ENCODE measurements at regions of chr1 and their contacts with region 1.

Region 1: DNA sequence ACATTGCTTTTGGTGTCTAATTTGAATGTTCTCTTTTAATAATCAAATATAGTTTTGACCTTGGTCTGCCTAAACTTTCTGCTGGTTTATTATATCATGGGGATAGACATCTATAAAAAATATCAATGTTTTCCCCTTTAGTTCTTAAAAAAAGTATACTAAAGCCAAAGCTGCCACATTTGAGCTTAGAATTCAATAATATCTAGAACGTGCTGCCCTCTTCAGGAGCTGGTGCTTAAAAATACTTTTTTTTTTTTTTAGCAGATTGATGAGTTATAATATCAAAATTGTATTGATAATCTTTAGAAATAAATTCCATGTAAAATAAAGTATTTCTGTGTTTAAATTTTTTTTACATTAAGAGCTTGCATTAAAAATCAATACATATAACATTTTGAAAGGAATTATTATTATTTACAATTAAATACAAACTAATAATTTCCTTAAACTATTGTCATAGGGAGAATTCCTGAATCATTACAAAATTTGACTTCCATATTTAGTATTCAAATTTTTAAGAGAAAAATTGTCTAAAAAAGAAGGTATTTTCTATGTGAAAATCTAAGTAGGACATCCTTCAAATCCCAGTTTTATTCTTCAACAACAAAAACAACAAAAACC is 40.1 kb upstream of the ADGRL2 start:
- DNase-seq: peak; percentile 45
- ATAC-seq: no peak
- H3K4me3 ChIP-seq: no peak overlapping the region
- H3K27ac ChIP-seq: no peak overlapping the region
- H3K4me1 ChIP-seq: no peaks in the 10 kb centered on the region
- H3K27me3 ChIP-seq: no peaks in the 10 kb centered on the region
- CTCF ChIP-seq: peak; percentile 54
- POLR2A ChIP-seq: no peak
- RAD21 ChIP-seq: peak; percentile 63

Region 2: DNA sequence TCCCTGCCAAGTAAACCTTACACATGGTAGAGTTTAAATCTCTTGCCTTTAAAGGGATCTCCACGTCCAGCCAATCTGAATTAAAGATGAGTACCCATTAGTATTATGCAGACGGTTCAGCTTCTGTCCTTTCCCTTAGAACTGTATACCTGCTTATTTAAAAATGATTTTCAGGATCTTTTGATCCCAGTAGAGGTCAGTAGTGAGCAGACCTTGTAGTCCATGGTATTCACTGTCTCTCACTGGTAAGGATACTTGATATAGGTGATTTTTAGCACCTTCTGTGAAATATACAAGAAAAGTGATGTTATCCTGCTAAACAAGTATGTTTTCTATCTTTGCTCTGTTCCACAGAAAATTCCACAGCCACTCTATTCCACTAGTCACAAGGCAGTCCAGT is 1542.5 kb before region 1 on chr1:
- CTCF ChIA-PET with region 1: no interaction called
- POLR2A ChIA-PET with region 1: no interaction called
- dilution Hi-C with region 1: no loop called
- in situ Hi-C with region 1: no loop called
- intact Hi-C with region 1: loop called (anchors 5 kb)
- DNase-seq: peak; percentile 59
- ATAC-seq: peak; percentile 85
- H3K4me3 ChIP-seq: no peak overlapping the region
- H3K27ac ChIP-seq: no peak overlapping the region
- H3K4me1 ChIP-seq: no peaks in the 10 kb centered on the region
- H3K27me3 ChIP-seq: no peaks in the 10 kb centered on the region
- CTCF ChIP-seq: peak; percentile 58
- POLR2A ChIP-seq: no peak
- RAD21 ChIP-seq: peak; percentile 57

Region 3: GRCh38 chr1:80248886-80249285 is 1511.7 kb before region 1 on chr1:
- CTCF ChIA-PET with region 1: no interaction called
- POLR2A ChIA-PET with region 1: no interaction called
- dilution Hi-C with region 1: no loop called
- in situ Hi-C with region 1: loop called (anchors 25 kb)
- intact Hi-C with region 1: no loop called
- DNase-seq: peak; percentile 29
- ATAC-seq: no peak
- H3K4me3 ChIP-seq: no peak overlapping the region
- H3K27ac ChIP-seq: no peak overlapping the region
- H3K4me1 ChIP-seq: no peaks in the 10 kb centered on the region
- H3K27me3 ChIP-seq: no peaks in the 10 kb centered on the region
- CTCF ChIP-seq: no peak
- POLR2A ChIP-seq: no peak
- RAD21 ChIP-seq: no peak

Region 4: DNA sequence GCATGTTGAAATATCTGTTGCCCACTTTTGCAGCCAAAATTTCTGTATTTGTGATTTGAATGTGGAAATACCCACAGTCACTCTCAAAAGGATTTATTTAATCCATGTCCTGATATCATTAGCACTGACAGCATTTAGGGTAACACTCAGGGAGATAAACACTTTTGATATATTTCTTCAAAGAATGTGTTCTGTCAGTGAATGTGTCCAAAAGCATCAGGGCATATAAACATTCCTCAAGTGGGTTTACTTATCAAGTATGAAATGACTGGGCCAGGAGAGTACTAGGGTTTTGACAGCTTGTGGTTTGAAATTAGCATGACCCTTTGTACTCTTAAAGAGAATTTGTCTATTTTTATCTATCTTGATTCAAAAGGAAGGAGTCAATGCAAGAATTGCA is 1261.9 kb before region 1 on chr1:
- CTCF ChIA-PET with region 1: interaction called, 10 read pairs
- POLR2A ChIA-PET with region 1: no interaction called
- dilution Hi-C with region 1: no loop called
- in situ Hi-C with region 1: no loop called
- intact Hi-C with region 1: no loop called
- DNase-seq: no peak
- ATAC-seq: no peak
- H3K4me3 ChIP-seq: no peak overlapping the region
- H3K27ac ChIP-seq: no peak overlapping the region
- H3K4me1 ChIP-seq: no peaks in the 10 kb centered on the region
- H3K27me3 ChIP-seq: no peaks in the 10 kb centered on the region
- CTCF ChIP-seq: no peak
- POLR2A ChIP-seq: no peak
- RAD21 ChIP-seq: no peak

Region 5: GRCh38 chr1:81314513-81315233 is 445.9 kb before region 1 on chr1:
- CTCF ChIA-PET with region 1: no interaction called
- POLR2A ChIA-PET with region 1: no interaction called
- dilution Hi-C with region 1: no loop called
- in situ Hi-C with region 1: no loop called
- intact Hi-C with region 1: loop called (anchors 5 kb)
- DNase-seq: no peak
- ATAC-seq: no peak
- H3K4me3 ChIP-seq: no peak overlapping the region
- H3K27ac ChIP-seq: no peak overlapping the region
- H3K4me1 ChIP-seq: no peaks in the 10 kb centered on the region
- H3K27me3 ChIP-seq: no peaks in the 10 kb centered on the region
- CTCF ChIP-seq: no peak
- POLR2A ChIP-seq: no peak
- RAD21 ChIP-seq: no peak

Region 6: GRCh38 chr1:81414488-81415015 is 346.0 kb before region 1 on chr1:
- CTCF ChIA-PET with region 1: no interaction called
- POLR2A ChIA-PET with region 1: no interaction called
- dilution Hi-C with region 1: no loop called
- in situ Hi-C with region 1: no loop called
- intact Hi-C with region 1: loop called (anchors 10 kb)
- DNase-seq: peak; percentile 23
- ATAC-seq: peak; percentile 40; the same call in 1 of the 2 replicates
- H3K4me3 ChIP-seq: no peak overlapping the region
- H3K27ac ChIP-seq: no peak overlapping the region
- H3K4me1 ChIP-seq: no peaks in the 10 kb centered on the region
- H3K27me3 ChIP-seq: no peaks in the 10 kb centered on the region
- CTCF ChIP-seq: peak; percentile 39
- POLR2A ChIP-seq: no peak
- RAD21 ChIP-seq: no peak

Region 7: DNA sequence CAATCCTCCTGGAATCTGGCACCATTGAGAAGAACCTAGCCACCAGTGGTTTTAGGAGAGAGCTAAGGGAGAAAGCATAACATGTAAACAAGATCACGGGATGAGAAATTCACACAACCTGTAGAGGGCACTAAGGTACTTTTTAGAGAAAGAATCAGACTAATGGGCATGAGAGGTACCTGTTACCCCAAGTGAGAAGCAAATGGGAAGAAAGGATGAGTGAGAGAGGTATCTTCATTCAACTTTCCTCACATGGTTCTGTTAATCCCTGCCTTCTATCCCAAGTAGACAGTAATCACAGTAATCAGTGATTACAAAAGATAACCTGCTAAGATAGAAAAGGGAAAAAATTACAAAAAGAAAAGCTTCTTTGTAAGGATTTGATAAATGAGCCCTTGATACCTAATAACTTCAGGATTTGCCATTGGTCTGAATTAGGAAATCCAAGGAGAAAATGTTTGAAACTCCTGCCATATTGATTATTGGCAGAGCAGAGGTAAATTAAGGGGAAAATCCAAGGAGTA is 210.9 kb before region 1 on chr1:
- CTCF ChIA-PET with region 1: interaction called, 6 read pairs
- POLR2A ChIA-PET with region 1: no interaction called
- dilution Hi-C with region 1: no loop called
- in situ Hi-C with region 1: loop called (anchors 10 kb)
- intact Hi-C with region 1: loop called (anchors 1 kb)
- DNase-seq: peak; percentile 52
- ATAC-seq: peak; percentile 82
- H3K4me3 ChIP-seq: no peak overlapping the region
- H3K27ac ChIP-seq: no peak overlapping the region
- H3K4me1 ChIP-seq: no peaks in the 10 kb centered on the region
- H3K27me3 ChIP-seq: no peaks in the 10 kb centered on the region
- CTCF ChIP-seq: peak; percentile 65
- POLR2A ChIP-seq: no peak
- RAD21 ChIP-seq: peak; percentile 77